Activated T-helper 1 cell treated with anti-CD3 and anti-CD28 coated beads, Interleukin-12 subunit alpha, Interleukin-12 subunit beta, Interleukin-2, Interleukin-4 antibody, amounts not matched to agents 30 ng/mL and 10 ng/mL and 1 ng/mL, durations not matched to agents 14 hours and 24 hours and 36 hours (primary cell): ENCODE measurements at regions of chr17 and their contacts with region 1.

Region 1: DNA sequence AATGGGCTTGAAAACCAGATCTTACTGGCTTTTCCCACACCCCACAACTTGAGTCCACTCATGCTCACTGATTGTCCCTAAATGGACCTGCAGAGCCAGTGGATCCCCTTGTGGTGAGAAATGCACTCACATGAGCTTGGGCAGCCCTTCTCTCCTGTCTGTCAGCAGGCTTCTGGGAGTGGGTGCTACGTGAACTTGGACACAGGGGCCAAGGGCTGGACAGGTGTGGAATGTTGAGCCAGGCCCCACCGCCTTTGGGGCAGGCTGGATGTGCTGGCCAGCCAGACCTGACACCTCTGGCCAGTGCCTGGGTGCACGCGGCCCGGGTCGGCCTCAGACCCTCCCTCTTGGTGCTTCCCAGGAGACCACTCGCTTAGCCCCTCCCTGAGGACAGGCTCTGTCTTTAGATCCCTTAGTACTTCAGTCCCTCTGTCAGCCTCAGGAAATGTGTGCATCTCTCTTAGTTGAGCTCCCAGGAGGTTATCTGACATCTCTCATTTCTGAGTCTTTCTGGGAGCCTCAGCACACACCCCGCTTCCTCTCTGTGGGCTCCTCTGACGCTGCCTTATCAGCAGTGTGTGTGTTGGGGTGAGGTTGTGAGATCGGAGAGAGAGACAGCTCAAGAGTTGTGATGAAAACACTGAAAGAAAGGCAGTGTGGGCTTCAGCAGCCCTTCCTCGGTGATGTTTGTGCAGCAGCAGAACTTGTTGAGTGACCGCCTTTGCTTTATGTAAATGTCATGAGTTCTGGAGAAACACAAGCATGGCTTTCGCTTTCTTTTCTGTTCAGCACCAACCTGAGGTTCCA is 117.0 kb downstream of the RAB11FIP4 start:
- DNase-seq: peak; percentile 75
- H3K4me3 Mint-ChIP-seq: peak overlapping the region; percentile 87
- H3K27ac Mint-ChIP-seq: peak overlapping the region; percentile 100
- H3K4me1 Mint-ChIP-seq: peaks cover 54% of the 10 kb centered on the region
- H3K27me3 Mint-ChIP-seq: peaks cover 2% of the 10 kb centered on the region

Region 2: GRCh38 chr17:31321481-31321880 is 187.0 kb before region 1 on chr17 and contains the start of gene EVI2A:
- intact Hi-C with region 1: loop called (anchors 2 kb)
- DNase-seq: peak; percentile 80
- H3K4me3 Mint-ChIP-seq: peak within 1 kb of the TSS; percentile 88
- H3K27ac Mint-ChIP-seq: peak within 1 kb of the TSS; percentile 92
- H3K4me1 Mint-ChIP-seq: peaks cover 46% of the 10 kb centered on the region
- H3K27me3 Mint-ChIP-seq: no peaks in the 10 kb centered on the region
- total RNA-seq, gene EVI2A: 46.3 and 47.9 TPM in 2 replicates

Region 3: GRCh38 chr17:31437720-31438420 is 70.6 kb before region 1 on chr17:
- intact Hi-C with region 1: loop called (anchors 5 kb)
- DNase-seq: no peak
- H3K4me3 Mint-ChIP-seq: no peak overlapping the region
- H3K27ac Mint-ChIP-seq: no peak overlapping the region
- H3K4me1 Mint-ChIP-seq: peaks cover 6% of the 10 kb centered on the region
- H3K27me3 Mint-ChIP-seq: peaks cover 21% of the 10 kb centered on the region

Region 4: DNA sequence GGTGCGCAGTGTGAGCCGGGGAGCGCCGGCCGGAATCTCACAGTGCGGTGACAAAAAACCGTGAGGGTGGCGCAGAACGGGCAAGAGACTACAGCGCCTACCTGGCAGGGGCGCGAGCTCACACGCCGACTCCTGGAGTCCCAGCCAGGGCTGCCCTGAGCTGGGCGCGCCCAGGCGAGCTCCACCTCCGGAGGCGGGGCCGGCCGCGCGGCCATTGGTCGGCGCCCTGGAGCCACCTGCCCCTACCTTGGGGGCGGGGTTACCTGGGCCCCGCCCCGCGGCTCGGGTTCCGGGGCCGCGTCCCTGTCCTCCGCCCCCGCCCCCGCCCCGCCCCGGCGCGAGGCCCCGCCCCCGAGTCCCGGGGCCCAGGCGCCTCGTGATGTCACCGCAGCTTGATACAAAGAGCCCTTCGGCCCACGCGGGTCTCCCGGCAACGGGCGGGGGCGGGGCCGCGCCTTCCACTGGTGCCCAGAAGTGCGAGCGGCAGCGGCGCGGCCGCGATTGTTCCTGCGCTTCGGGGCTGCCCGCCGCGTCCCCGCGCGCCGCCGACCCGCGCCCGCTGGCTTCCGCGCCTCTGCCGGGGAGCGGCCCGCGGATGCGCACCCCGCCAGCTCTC is 20.7 kb before region 1 on chr17:
- intact Hi-C with region 1: loop called (anchors 1 kb)
- DNase-seq: peak; percentile 89
- H3K4me3 Mint-ChIP-seq: peak overlapping the region; percentile 78
- H3K27ac Mint-ChIP-seq: peak overlapping the region; percentile 68
- H3K4me1 Mint-ChIP-seq: peaks cover 52% of the 10 kb centered on the region
- H3K27me3 Mint-ChIP-seq: peaks cover 2% of the 10 kb centered on the region

Region 5: GRCh38 chr17:31494259-31495021 is 14.1 kb before region 1 on chr17:
- intact Hi-C with region 1: loop called (anchors 1 kb)
- DNase-seq: peak; percentile 59
- H3K4me3 Mint-ChIP-seq: peak overlapping the region; percentile 67
- H3K27ac Mint-ChIP-seq: peak overlapping the region; percentile 91
- H3K4me1 Mint-ChIP-seq: peaks cover 68% of the 10 kb centered on the region
- H3K27me3 Mint-ChIP-seq: no peaks in the 10 kb centered on the region

Region 6: DNA sequence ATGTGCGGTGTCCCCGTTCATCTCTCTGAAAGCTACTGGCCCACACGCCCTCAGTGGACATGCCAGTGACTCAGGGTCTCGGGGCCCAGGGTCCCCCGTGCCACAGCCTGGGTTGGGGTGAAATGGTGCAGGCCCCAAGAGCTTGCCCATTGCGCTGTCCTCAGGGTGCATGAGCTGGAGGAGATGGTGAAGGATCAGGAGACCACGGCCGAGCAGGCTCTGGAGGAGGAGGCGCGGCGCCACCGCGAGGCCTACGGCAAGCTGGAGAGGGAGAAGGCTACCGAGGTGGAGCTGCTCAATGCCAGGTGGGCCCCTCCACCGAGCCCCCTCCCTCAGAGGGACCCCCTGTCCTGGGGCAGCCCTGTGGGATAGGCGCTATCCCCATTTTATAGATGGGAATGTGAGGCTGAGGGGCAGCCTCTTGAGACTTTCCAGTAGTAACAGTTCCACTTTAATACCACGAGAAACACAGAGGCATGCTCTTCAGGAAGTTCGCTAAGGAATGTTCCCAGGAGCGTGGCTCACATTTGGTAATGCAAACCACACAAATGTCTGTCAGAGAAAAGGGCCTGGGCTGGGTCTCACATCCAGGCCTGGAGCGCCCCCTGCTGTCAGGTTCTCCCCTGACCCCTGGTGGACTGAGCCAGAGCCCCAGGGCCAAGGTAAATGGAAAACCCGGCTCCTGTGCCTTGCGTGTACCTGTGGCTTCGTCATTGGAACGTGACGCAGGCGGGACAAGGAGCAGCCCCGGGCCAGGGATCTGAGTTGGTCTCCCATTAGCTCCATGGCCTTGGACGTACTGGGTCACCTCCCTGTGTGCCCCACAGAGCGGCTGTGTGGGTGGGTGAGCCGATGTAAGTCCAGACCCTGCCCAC is 16.7 kb after region 1 on chr17:
- intact Hi-C with region 1: no loop called
- DNase-seq: peak; percentile 67
- H3K4me3 Mint-ChIP-seq: no peak overlapping the region
- H3K27ac Mint-ChIP-seq: no peak overlapping the region
- H3K4me1 Mint-ChIP-seq: no peaks in the 10 kb centered on the region
- H3K27me3 Mint-ChIP-seq: no peaks in the 10 kb centered on the region

Region 7: DNA sequence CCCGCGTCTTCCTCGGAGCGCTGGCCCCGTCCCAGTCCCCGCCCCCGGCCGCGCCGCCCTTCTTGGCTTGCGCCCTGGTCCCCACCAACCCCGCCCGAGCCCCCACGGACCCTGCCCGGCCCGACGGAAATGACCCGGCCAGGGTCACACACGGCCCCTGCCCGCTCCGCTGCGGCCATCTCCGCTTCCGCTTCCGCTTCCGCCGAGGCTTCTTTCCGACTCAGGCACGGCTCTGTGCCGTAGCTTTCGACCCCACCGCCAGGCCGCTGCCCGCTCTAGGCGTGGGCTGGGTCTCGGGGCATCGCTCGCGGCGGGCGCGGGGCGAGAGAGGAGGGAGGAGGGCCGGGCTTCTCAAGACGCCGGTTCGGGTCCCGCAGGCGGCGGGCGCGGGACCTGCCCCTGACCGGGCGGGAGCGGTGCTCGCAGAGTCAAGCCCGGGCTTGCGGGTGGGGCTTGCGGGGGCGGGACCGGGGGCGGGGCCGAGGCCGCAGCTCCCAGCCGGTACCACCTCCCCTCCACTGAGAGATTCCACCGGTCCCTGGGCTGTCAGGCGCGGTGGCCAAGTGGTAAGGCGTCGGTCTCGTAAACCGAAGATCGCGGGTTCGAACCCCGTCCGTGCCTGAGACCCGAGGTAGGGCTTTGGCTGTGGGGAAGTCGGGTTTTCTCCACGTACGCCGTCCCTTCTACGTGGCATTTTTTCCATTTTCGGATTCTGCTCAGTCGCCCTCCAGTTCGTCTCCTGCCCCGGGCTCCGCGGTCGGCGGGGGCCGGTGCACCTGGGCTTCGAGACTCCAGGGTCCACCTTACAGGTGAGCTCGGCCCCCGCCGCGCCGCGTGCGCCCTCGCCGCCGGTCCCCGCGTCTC is 41.3 kb after region 1 on chr17:
- intact Hi-C with region 1: loop called (anchors 2 kb)
- DNase-seq: peak; percentile 86
- H3K4me3 Mint-ChIP-seq: peak overlapping the region; percentile 92
- H3K27ac Mint-ChIP-seq: peak overlapping the region; percentile 89
- H3K4me1 Mint-ChIP-seq: peaks cover 15% of the 10 kb centered on the region
- H3K27me3 Mint-ChIP-seq: peaks cover 18% of the 10 kb centered on the region